ENCODE measurements at regions of chr1 and their contacts with region 1.

Region 1: GRCh38 chr1:38834937-38835827 is 24.4 kb downstream of the RRAGC start:
- DNase-seq: peak in 1 of 5 donors; percentile 55
- ATAC-seq: peak; percentile 60 to 88 (median 80)
- H3K4me3 ChIP-seq: no peak overlapping the region
- H3K27ac ChIP-seq: no peak overlapping the region
- H3K4me1 ChIP-seq: peaks cover 0 to 18% (median 9%) of the 10 kb centered on the region in 12 donors
- H3K27me3 ChIP-seq: peaks cover 0 to 21% (median 0%) of the 10 kb centered on the region in 9 donors
- CTCF ChIP-seq: peak; percentile 64 to 86 (median 80)
- POLR2A ChIP-seq: no peak

Region 2: GRCh38 chr1:37602750-37603694 is 1232.2 kb before region 1 on chr1:
- intact Hi-C with region 1: loop called in 3 of 10 experiments (anchors 10 kb)
- DNase-seq: no peak
- ATAC-seq: peak in 2 of 4 donors; percentile 42 to 49
- H3K4me3 ChIP-seq: no peak overlapping the region
- H3K27ac ChIP-seq: no peak overlapping the region
- H3K4me1 ChIP-seq: peaks cover 0 to 4% (median 0%) of the 10 kb centered on the region in 12 donors
- H3K27me3 ChIP-seq: peaks cover 0 to 27% (median 3%) of the 10 kb centered on the region in 9 donors
- CTCF ChIP-seq: peak; percentile 37 to 67 (median 58)
- POLR2A ChIP-seq: no peak

Region 3: DNA sequence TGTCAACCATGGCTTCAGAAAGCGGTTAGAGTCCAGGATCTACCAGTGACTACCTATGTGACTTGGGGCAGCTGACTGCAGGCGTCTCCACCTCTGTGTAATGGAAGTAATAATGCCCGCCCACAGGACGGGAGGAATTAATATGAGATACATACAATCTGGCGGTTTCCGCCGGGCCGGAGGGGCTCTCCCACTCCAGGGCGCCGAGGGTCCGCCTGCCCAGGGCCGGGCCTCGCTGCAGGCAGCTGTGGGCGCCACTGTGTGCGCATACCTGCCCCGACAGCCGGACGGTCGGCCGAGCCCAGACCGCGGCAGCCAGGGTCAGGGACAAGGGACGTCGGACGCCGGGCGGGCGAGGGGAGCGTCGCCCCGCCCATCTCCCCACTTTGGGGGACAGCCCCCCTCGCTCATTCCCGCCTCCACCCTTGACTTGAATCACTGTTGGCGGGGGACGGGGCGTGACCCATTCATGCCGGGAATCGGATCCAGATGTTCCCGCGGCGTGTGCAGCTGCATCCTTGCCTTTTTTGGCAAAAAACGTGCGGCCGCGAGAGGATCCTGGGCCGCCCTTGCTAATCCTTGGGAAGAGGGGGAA is 839.3 kb before region 1 on chr1:
- intact Hi-C with region 1: loop called in 1 of 10 experiments (anchors 10 kb)
- DNase-seq: peak; percentile 80 to 91 (median 88)
- ATAC-seq: peak; percentile 59 to 75 (median 68)
- H3K4me3 ChIP-seq: peak overlapping the region; percentile 37 to 64 (median 55)
- H3K27ac ChIP-seq: peak overlapping the region; percentile 51 to 97 (median 83)
- H3K4me1 ChIP-seq: peaks cover 8 to 64% (median 45%) of the 10 kb centered on the region in 12 donors
- H3K27me3 ChIP-seq: peaks cover 0 to 3% (median 0%) of the 10 kb centered on the region in 9 donors
- CTCF ChIP-seq: no peak
- POLR2A ChIP-seq: peak in 1 of 2 donors; percentile 47

Region 4: DNA sequence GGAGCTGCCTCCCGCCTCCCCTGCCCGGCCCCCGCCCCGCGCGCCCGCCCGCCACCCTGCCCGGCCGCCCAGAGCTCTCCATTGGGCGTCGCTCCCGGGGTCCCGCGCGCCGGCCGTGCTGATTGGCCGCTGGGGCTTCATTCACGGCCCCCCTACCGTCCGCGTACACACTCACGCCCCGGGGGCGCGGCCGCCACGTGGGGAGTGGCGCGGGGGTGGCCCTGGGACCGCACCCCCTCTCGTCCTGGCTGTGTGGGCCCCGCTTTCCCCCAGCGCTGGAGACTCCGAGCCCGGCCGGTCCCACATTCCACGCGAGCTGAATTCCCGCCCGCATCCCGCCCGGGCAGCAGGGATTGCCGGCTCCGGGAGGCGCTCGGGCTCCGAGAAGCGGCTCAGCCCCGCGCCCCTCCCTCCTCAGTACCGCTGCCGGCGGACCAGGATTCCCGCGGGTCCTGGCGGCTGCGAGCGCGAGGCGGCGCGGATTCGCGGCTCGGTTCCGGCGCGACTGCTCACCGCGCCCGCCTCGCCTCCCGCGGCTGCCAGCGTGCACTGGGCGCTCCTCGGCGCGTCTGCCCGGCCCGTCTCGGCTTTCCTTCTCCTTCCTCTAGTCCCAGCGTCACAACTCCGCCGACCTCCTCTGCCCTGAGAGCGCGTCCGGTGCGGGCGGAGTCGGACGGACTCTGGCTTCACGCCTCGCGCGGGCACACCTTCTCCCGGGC is 788.1 kb before region 1 on chr1:
- intact Hi-C with region 1: loop called in 3 of 10 experiments (anchors 10 kb)
- DNase-seq: peak; percentile 86 to 94 (median 91)
- ATAC-seq: peak; percentile 93 to 97 (median 96)
- H3K4me3 ChIP-seq: peak overlapping the region; percentile 30 to 82 (median 66)
- H3K27ac ChIP-seq: peak overlapping the region in 4 of 12 donors; percentile 13 to 72 (median 55)
- H3K4me1 ChIP-seq: peaks cover 3 to 38% (median 19%) of the 10 kb centered on the region in 12 donors
- H3K27me3 ChIP-seq: peaks cover 31 to 65% (median 37%) of the 10 kb centered on the region in 9 donors
- CTCF ChIP-seq: peak in 5 of 12 donors; percentile 13 to 35 (median 23)
- POLR2A ChIP-seq: no peak

Region 5: GRCh38 chr1:38693031-38693430 is 142.2 kb before region 1 on chr1:
- intact Hi-C with region 1: no loop called
- DNase-seq: no peak
- ATAC-seq: no peak
- H3K4me3 ChIP-seq: no peak overlapping the region
- H3K27ac ChIP-seq: no peak overlapping the region
- H3K4me1 ChIP-seq: no peaks in the 10 kb centered on the region
- H3K27me3 ChIP-seq: peaks cover 0 to 16% (median 10%) of the 10 kb centered on the region in 9 donors
- CTCF ChIP-seq: no peak
- POLR2A ChIP-seq: no peak

Region 6: DNA sequence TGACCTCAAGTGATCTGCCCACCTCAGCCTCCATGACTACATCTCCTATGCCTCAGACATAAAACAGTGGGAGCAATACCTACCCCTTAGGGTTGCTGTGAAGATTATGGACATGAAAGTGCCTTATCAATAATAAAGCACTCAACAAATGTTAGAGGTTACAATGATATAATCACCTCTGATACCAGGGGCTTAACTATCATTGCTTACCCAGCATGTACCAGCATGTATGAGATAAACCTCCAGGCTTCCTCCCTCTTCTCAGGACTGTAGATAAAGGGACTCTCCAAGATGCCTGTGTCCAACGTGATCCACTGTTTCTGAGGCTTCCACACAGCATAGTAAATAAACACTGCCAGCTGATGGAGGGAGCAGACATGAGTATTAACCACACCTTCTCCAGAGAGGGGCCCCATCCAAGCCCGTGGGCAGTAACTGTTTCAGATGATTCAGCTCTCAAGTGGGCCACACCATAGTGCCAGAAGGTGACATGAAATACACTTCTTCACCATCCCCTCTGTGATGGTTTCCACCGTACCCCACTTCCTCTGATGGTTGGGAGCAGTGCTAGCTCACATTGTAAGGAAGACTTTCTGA is 80.3 kb after region 1 on chr1:
- intact Hi-C with region 1: no loop called
- DNase-seq: no peak
- ATAC-seq: no peak
- H3K4me3 ChIP-seq: no peak overlapping the region
- H3K27ac ChIP-seq: no peak overlapping the region
- H3K4me1 ChIP-seq: no peaks in the 10 kb centered on the region
- H3K27me3 ChIP-seq: no peaks in the 10 kb centered on the region
- CTCF ChIP-seq: no peak
- POLR2A ChIP-seq: no peak